Sciatic nerve (tissue), 2 donors: ENCODE measurements at regions of chr17 and their contacts with region 1.

Region 1: GRCh38 chr17:63478791-63479494 is 2.1 kb downstream of the ACE start:
- DNase-seq: peak; percentile 89
- ATAC-seq: peak; percentile 89

Region 2: DNA sequence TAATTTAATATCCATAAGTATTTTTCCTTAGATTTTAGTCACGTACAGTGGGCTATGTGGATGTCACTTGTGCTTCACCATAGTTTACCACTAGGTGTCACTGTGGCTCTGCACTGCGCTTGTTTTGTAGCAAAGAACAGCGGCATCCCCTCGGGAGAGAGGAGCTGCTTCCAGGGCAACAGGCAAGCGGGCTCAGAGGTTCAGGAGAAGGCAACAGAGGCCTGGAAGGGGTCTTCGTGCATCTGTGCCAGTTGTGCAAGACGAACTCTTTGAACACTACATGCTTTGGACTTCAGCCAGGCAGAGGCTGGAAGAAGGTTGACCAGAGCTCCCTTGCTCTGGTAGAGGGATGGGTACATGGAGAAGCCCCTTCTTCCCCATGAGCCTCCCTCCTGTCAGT is 53.5 kb before region 1 on chr17:
- intact Hi-C with region 1: loop called (anchors 5 kb)
- DNase-seq: peak; percentile 86
- ATAC-seq: peak; percentile 91